ENCODE measurements at regions of chr10 and their contacts with region 1.

Region 1: DNA sequence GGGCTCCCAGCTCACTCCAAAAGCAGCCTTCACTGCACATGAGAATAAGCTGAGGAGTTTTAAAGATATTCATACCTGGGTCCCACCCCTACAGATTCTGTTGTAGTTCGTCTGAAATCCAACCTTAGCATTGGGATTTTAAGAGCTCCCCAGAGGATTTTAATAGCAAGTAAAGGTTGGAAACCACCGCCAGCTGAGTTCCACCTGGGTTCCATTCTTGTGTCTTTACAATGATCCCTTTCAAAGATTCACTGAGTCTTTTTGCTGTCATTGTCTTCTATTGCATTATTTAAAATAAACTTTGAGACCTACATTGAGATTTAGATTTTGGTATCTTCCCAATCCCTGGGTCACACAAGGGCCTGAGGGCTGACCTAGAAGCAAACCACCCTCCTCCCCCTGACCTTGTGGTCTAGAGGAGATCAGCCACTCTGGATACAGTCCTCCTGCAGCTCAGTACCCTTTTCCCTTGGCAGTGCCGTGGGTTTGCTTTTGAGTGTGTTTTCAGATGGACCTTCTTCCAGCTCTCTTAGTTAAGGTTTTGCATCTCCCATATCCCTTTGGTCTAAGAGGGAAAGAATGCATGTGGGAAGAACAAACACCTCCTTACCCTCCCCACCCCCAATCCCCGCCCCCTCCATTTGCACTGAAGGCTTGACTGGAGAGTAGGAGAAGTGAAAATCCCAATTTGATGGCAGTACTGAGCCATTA is 22.6 kb upstream of the SIRT1 start:
- DNase-seq: no peak
- ATAC-seq: no peak
- H3K4me3 ChIP-seq: no peak overlapping the region
- H3K4me3 Mint-ChIP-seq: no peak overlapping the region
- H3K27ac ChIP-seq: no peak overlapping the region
- H3K27ac Mint-ChIP-seq: no peak overlapping the region
- H3K4me1 ChIP-seq: no peaks in the 10 kb centered on the region
- H3K4me1 Mint-ChIP-seq: no peaks in the 10 kb centered on the region
- H3K27me3 ChIP-seq: no peaks in the 10 kb centered on the region
- H3K27me3 Mint-ChIP-seq: no peaks in the 10 kb centered on the region
- CTCF ChIP-seq: no peak

Region 2: DNA sequence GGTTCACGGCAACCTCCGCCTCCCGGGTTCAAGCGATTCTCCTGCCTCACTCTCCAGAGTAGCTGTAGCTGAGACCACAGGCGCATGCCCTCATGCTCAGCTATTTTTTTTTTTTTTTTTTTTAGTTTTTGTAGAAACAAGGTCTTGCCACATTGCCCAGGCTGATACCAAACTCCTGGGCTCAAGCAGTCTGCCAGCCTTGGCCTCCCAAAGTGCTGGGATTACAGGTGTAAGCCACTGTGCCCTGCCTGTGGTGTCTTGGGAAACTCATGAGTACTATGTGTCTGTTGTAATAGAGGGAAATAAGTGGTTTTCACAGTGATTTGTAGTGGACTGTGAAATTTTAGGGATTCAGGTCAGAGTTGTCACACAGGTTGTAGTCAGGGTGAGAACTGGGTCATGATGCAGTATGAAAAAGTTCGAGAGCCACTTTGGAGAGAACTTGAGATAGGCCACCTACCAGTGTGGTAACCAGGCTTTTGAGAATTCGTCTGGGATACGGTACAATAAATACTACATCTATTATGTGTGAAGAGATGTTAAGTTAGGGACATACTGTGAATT is 53.0 kb after region 1 on chr10:
- CTCF ChIA-PET with region 1: no interaction called
- POLR2A ChIA-PET with region 1: no interaction called
- intact Hi-C with region 1: loop called in 1 of 2 experiments (anchors 5 kb)
- DNase-seq: no peak
- ATAC-seq: no peak
- H3K4me3 ChIP-seq: no peak overlapping the region
- H3K4me3 Mint-ChIP-seq: no peak overlapping the region
- H3K27ac ChIP-seq: no peak overlapping the region
- H3K27ac Mint-ChIP-seq: peak overlapping the region; percentile 37
- H3K4me1 ChIP-seq: no peaks in the 10 kb centered on the region
- H3K4me1 Mint-ChIP-seq: peaks cover 32% of the 10 kb centered on the region
- H3K27me3 ChIP-seq: no peaks in the 10 kb centered on the region
- H3K27me3 Mint-ChIP-seq: no peaks in the 10 kb centered on the region
- CTCF ChIP-seq: no peak

Region 3: DNA sequence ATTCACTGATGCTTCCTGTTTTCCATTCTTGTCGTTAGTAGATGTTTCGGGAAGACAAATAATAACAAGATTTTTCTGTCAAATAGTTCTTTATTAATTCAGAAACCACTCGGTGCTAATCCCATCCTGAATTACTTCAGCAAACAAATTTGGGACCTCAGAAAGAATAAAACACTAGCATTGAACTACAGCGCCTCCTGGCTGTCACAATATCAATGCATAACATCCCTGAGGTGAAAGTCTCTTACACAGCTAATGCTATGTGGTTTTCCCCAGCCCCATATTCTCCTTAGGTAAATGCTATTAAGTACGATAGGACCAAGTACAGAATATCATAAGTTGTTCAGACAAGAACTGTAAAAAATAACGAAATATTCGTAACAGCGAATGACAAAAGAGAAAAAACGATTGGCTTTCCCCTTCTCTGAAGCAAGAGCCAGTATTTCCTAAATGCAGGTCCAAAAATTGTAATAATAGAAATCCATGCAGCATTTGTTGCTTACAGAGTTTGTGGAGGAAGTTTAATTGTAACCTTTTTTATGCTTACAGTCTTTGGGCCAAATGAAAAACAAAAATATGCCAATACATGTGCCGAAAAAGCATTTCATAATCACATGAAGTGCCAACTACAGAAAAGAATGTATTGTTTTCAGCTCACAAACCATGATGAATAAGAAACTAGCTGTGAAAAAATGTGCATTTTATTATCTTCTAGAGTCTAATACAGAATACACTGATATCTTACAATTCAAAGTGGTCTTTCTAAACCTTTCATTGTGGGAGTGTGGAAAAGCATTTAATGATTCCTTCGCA is 294.7 kb after region 1 on chr10:
- CTCF ChIA-PET with region 1: interaction called, 155 read pairs
- POLR2A ChIA-PET with region 1: no interaction called
- intact Hi-C with region 1: no loop called
- DNase-seq: peak; percentile 12 to 77 (median 58)
- ATAC-seq: peak; percentile 71
- H3K4me3 ChIP-seq: no peak overlapping the region
- H3K4me3 Mint-ChIP-seq: no peak overlapping the region
- H3K27ac ChIP-seq: no peak overlapping the region
- H3K27ac Mint-ChIP-seq: no peak overlapping the region
- H3K4me1 ChIP-seq: no peaks in the 10 kb centered on the region
- H3K4me1 Mint-ChIP-seq: no peaks in the 10 kb centered on the region
- H3K27me3 ChIP-seq: no peaks in the 10 kb centered on the region
- H3K27me3 Mint-ChIP-seq: peaks cover 5% of the 10 kb centered on the region
- CTCF ChIP-seq: peak; percentile 94

Region 4: GRCh38 chr10:68208424-68209042 is 346.6 kb after region 1 on chr10:
- CTCF ChIA-PET with region 1: no interaction called
- POLR2A ChIA-PET with region 1: no interaction called
- intact Hi-C with region 1: loop called in 1 of 2 experiments (anchors 5 kb)
- DNase-seq: peak in 2 of 9 experiments; percentile 6 to 20
- ATAC-seq: no peak
- H3K4me3 ChIP-seq: no peak overlapping the region
- H3K4me3 Mint-ChIP-seq: no peak overlapping the region
- H3K27ac ChIP-seq: no peak overlapping the region
- H3K27ac Mint-ChIP-seq: no peak overlapping the region
- H3K4me1 ChIP-seq: no peaks in the 10 kb centered on the region
- H3K4me1 Mint-ChIP-seq: no peaks in the 10 kb centered on the region
- H3K27me3 ChIP-seq: no peaks in the 10 kb centered on the region
- H3K27me3 Mint-ChIP-seq: peaks cover 22% of the 10 kb centered on the region
- CTCF ChIP-seq: no peak

Region 5: DNA sequence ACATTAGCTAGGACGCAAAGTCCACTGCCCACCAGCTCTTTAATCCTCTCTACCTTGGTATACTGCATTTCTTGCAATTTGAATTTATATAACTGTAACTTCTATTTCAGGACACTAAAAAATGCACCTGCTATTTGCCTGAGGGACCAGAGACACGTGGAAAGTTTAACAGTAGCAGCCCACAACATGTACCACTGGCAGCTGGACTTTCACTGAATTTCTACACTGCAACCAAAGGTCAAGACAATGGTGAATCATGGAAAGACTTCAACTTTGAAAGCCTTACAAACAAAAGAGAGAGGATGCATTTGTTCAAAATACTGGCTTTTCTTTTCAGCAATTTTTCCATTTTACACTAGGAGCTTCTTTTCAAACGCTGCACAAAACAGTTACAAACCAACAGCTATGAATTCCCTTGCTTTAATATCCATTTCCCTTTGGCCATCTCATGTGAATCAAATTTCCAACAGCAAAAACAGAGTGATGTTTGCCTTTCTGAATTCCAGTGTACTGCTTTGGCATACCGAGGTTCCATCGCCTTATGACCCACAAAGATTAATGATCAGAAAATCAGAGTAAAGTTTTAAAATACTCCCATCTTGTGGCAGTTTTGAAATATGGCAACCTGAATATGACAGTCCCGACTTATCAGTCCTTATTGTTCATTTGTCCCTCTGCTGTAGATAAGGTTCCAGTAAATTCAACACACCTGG is 440.0 kb after region 1 on chr10:
- CTCF ChIA-PET with region 1: no interaction called
- POLR2A ChIA-PET with region 1: no interaction called
- intact Hi-C with region 1: loop called in 1 of 2 experiments (anchors 5 kb)
- DNase-seq: peak in 2 of 9 experiments; percentile 37 to 50
- ATAC-seq: peak; percentile 36
- H3K4me3 ChIP-seq: no peak overlapping the region
- H3K4me3 Mint-ChIP-seq: no peak overlapping the region
- H3K27ac ChIP-seq: no peak overlapping the region
- H3K27ac Mint-ChIP-seq: no peak overlapping the region
- H3K4me1 ChIP-seq: no peaks in the 10 kb centered on the region
- H3K4me1 Mint-ChIP-seq: no peaks in the 10 kb centered on the region
- H3K27me3 ChIP-seq: no peaks in the 10 kb centered on the region
- H3K27me3 Mint-ChIP-seq: no peaks in the 10 kb centered on the region
- CTCF ChIP-seq: peak; percentile 56

Region 6: GRCh38 chr10:68348265-68348741 is 486.4 kb after region 1 on chr10:
- CTCF ChIA-PET with region 1: interaction called, 4 read pairs
- POLR2A ChIA-PET with region 1: no interaction called
- intact Hi-C with region 1: loop called in 1 of 2 experiments (anchors 2 kb)
- DNase-seq: peak in 8 of 9 experiments; percentile 6 to 76 (median 46)
- ATAC-seq: peak; percentile 90
- H3K4me3 ChIP-seq: no peak overlapping the region
- H3K4me3 Mint-ChIP-seq: no peak overlapping the region
- H3K27ac ChIP-seq: peak overlapping the region in 1 of 2 experiments; percentile 33
- H3K27ac Mint-ChIP-seq: peak overlapping the region; percentile 76
- H3K4me1 ChIP-seq: no peaks in the 10 kb centered on the region
- H3K4me1 Mint-ChIP-seq: peaks cover 6% of the 10 kb centered on the region
- H3K27me3 ChIP-seq: no peaks in the 10 kb centered on the region
- H3K27me3 Mint-ChIP-seq: no peaks in the 10 kb centered on the region
- CTCF ChIP-seq: peak; percentile 79